ENCODE measurements at regions of chr20 and their contacts with region 1.

Region 1: GRCh38 chr20:10596726-10597125 is 77.1 kb downstream of the JAG1 start:
- DNase-seq: no peak
- H3K4me3 ChIP-seq: no peak overlapping the region
- H3K27ac ChIP-seq: peak overlapping the region; percentile 37 to 85
- H3K4me1 ChIP-seq: peaks cover 0 to 73% (median 34%) of the 10 kb centered on the region in 4 donors
- H3K27me3 ChIP-seq: no peaks in the 10 kb centered on the region
- CTCF ChIP-seq: no peak

Region 2: GRCh38 chr20:10402938-10403608 is 193.7 kb before region 1 on chr20:
- intact Hi-C with region 1: no loop called
- DNase-seq: no peak
- H3K4me3 ChIP-seq: no peak overlapping the region
- H3K27ac ChIP-seq: no peak overlapping the region
- H3K4me1 ChIP-seq: no peaks in the 10 kb centered on the region
- H3K27me3 ChIP-seq: no peaks in the 10 kb centered on the region
- CTCF ChIP-seq: no peak

Region 3: DNA sequence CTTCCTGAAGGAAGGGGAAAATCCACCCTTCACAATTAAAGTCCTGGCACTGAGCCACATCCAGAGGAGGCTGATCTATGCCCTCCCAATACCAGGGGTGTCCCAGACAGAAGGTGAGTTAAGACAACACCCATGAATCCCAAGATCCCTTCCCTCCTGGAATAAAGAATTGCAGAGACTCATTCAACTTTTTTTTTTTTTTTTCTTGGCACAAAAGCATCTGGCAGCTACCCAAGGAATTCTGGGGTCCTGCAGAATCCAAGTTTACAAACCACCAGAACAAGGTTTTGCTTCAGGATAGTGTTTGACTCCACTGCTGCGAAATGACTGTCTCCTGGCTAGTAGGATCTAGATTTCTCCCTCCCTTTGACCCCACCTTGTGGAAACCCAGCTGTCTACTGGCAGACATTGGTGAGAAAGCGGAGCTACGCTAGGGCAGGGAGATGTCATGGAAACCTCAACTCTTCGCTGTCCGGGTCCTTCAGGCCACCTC is 39.6 kb after region 1 on chr20:
- intact Hi-C with region 1: loop called (anchors 5 kb)
- DNase-seq: no peak
- H3K4me3 ChIP-seq: no peak overlapping the region
- H3K27ac ChIP-seq: peak overlapping the region; percentile 99
- H3K4me1 ChIP-seq: peaks cover 4 to 97% (median 60%) of the 10 kb centered on the region in 4 donors
- H3K27me3 ChIP-seq: no peaks in the 10 kb centered on the region
- CTCF ChIP-seq: no peak